ENCODE measurements at regions of chr16 and their contacts with region 1.

Region 1: DNA sequence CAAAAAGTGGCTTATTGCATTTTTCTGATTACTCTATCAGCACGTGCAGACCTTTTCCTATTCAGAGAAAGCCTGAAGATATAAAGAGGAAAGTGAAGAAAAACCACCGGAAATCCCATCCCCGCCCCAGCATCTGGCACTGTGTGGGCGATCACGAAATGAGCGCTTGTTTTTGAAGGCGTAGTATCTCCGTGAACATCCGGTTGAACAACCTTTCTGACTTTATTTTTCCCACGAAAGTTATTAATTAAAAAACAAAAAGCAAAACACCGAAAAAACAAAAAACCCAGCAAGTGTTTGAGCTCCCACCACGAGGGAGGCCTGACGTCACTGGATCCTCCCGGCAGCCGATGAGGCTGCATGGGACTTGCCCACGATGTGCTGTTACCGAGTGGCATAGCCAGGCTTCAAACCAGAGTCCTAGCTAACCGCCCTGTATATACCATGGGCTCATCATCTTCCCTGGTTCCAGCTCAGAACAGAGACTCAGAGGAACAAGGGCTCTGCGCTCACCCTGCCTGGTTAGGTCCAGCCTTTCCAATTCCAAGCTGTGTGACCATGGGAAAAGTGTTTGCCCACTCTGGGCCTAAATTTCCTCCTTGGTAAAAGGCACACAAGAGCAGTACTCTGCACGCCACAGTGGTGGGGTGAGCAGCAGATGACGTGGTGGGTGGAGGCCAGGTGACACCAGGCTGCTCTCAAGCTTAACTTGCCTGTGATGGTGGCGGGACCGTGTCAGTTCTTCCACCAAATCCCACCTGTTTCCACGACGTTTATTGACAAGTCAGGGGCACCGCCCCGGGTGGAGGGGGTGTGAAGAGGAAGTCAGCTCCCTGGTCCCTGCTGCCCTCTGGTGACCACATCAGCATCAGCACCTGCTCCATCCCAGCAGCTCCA is 34.3 kb upstream of the IL21R start:
- DNase-seq: peak; percentile 83 to 94 (median 92)
- ATAC-seq: peak; percentile 96
- H3K4me3 ChIP-seq: no peak overlapping the region
- H3K27ac ChIP-seq: no peak overlapping the region
- H3K4me1 ChIP-seq: peaks cover 9 to 11% of the 10 kb centered on the region in 2 experiments
- H3K27me3 ChIP-seq: peaks cover 0 to 9% of the 10 kb centered on the region in 2 experiments; a peak in 2 of 5 replicates
- CTCF ChIP-seq: peak; percentile 82 to 91 (median 86)
- EP300 ChIP-seq: no peak
- POLR2A ChIP-seq: no peak
- RAD21 ChIP-seq: peak; percentile 81 to 95

Region 2: DNA sequence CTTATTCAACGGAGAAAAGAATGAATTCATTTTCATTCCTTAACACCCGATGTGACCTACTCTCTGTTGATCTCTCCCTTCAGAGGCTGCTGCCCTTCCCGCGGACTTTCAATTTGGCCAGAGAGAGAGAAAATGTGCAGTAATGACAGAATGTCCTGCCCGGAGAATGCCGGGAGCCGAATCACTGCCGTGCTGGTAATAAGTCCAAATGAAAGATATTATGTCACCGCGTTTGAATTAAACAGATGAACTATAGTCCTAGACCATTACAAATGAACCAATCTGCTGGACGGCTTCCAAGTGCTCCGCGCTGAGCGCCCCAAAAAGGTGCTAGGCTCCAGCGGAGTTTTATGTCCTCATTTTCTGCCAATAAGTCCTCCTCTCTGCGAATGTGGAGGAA is 315.7 kb before region 1 on chr16:
- CTCF ChIA-PET with region 1: no interaction called
- POLR2A ChIA-PET with region 1: no interaction called
- in situ Hi-C with region 1: no loop called
- intact Hi-C with region 1: no loop called
- DNase-seq: no peak
- ATAC-seq: no peak
- H3K4me3 ChIP-seq: no peak overlapping the region
- H3K27ac ChIP-seq: no peak overlapping the region
- H3K4me1 ChIP-seq: no peaks in the 10 kb centered on the region
- H3K27me3 ChIP-seq: peaks cover 7 to 31% of the 10 kb centered on the region in 2 experiments; a peak in 3 of 5 replicates
- CTCF ChIP-seq: no peak
- EP300 ChIP-seq: no peak
- POLR2A ChIP-seq: no peak
- RAD21 ChIP-seq: no peak

Region 3: DNA sequence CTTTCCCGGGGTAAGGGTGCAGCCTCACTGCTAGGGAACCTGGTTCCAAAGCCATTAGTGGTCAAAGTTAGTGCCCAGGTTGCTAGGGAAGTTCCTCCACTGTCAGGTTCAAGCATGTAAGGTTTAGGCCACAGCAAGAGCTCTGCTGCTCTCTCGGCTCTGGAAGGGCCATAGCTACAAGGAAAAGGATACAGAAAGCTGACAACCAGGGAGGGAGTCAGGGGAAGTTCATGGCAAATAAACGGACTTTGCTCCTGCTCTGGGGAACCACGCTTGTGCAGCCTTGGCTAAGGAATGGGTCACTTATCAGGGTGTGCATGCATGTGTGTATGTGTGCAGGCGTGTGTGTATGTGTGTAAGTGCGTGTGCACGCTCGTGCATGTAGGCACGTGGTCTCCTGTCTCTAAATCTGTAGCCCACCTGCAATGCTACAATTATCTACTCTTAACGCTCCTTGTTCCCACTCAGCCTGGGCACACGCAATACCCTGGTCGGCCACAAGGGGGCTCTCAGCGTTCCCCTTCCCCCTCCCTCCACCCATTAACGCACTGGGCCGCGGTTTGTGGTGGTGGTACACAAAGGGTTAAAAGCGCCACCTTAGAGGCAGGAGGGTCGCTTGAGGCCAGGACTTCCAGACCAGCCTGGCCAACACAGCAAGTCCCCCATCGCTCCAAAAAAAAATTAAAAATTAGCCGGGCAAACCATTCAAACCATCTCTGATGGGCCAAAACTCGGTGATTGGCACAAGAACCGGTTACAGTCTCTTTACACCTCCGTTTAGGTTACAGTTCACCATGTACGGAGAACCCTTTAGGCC is 212.8 kb before region 1 on chr16:
- CTCF ChIA-PET with region 1: interaction called, 14 read pairs
- POLR2A ChIA-PET with region 1: no interaction called
- in situ Hi-C with region 1: no loop called
- intact Hi-C with region 1: loop called (anchors 1 kb)
- DNase-seq: peak; percentile 68 to 87 (median 82)
- ATAC-seq: peak; percentile 95
- H3K4me3 ChIP-seq: no peak overlapping the region
- H3K27ac ChIP-seq: no peak overlapping the region
- H3K4me1 ChIP-seq: no peaks in the 10 kb centered on the region
- H3K27me3 ChIP-seq: peaks cover 0 to 15% of the 10 kb centered on the region in 2 experiments; a peak in 2 of 5 replicates
- CTCF ChIP-seq: peak; percentile 86 to 92 (median 87)
- EP300 ChIP-seq: no peak
- POLR2A ChIP-seq: no peak
- RAD21 ChIP-seq: peak; percentile 65 to 84

Region 4: DNA sequence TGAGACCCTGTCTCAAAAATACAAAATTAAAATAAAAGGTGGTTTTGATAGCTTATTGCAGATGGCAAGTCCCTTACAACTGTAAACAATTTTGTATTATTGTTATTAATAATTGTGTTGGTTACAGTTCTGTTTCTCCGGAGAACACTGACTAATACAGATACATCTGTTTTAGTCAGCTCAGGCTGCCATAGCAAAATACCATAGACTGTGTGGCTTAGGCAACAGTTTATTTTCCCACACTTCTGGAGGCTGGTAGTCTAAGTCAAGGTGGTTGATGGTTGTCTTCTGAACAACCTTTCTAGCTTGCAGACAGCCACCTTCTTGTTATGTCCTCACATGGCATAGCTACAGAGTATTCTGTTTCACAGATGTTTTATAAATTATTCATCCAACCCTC is 20.0 kb after region 1 on chr16:
- CTCF ChIA-PET with region 1: no interaction called
- POLR2A ChIA-PET with region 1: no interaction called
- in situ Hi-C with region 1: no loop called
- intact Hi-C with region 1: no loop called
- DNase-seq: no peak
- ATAC-seq: no peak
- H3K4me3 ChIP-seq: no peak overlapping the region
- H3K27ac ChIP-seq: no peak overlapping the region
- H3K4me1 ChIP-seq: no peaks in the 10 kb centered on the region; a peak in 1 of 5 replicates
- H3K27me3 ChIP-seq: peaks cover 10 to 31% of the 10 kb centered on the region in 2 experiments
- CTCF ChIP-seq: no peak
- EP300 ChIP-seq: no peak
- POLR2A ChIP-seq: no peak
- RAD21 ChIP-seq: no peak

Region 5: GRCh38 chr16:27455700-27456099 is 88.0 kb after region 1 on chr16:
- CTCF ChIA-PET with region 1: no interaction called
- POLR2A ChIA-PET with region 1: no interaction called
- in situ Hi-C with region 1: no loop called
- intact Hi-C with region 1: loop called (anchors 5 kb)
- DNase-seq: peak in 1 of 4 experiments; percentile 13
- ATAC-seq: no peak
- H3K4me3 ChIP-seq: no peak overlapping the region
- H3K27ac ChIP-seq: no peak overlapping the region
- H3K4me1 ChIP-seq: peaks cover 0 to 2% of the 10 kb centered on the region in 2 experiments; a peak in 2 of 5 replicates
- H3K27me3 ChIP-seq: peaks cover 11 to 30% of the 10 kb centered on the region in 2 experiments; a peak in 4 of 5 replicates
- CTCF ChIP-seq: no peak
- EP300 ChIP-seq: no peak
- POLR2A ChIP-seq: no peak
- RAD21 ChIP-seq: no peak

Region 6: GRCh38 chr16:27579087-27579980 is 211.6 kb after region 1 on chr16:
- CTCF ChIA-PET with region 1: no interaction called
- POLR2A ChIA-PET with region 1: no interaction called
- in situ Hi-C with region 1: no loop called
- intact Hi-C with region 1: no loop called
- DNase-seq: no peak
- ATAC-seq: no peak
- H3K4me3 ChIP-seq: no peak overlapping the region
- H3K27ac ChIP-seq: no peak overlapping the region
- H3K4me1 ChIP-seq: peaks cover 0 to 5% of the 10 kb centered on the region in 2 experiments; a peak in 1 of 5 replicates
- H3K27me3 ChIP-seq: no peaks in the 10 kb centered on the region
- CTCF ChIP-seq: no peak
- EP300 ChIP-seq: no peak
- POLR2A ChIP-seq: no peak
- RAD21 ChIP-seq: no peak